Panc1 (cell line): ENCODE measurements at regions of chr14 and their contacts with region 1.

Region 1: GRCh38 chr14:56751471-56751870 is 58.8 kb downstream of the OTX2 start:
- DNase-seq: no peak
- ATAC-seq: no peak
- H3K4me3 ChIP-seq: no peak overlapping the region
- H3K27ac ChIP-seq: no peak overlapping the region
- H3K4me1 ChIP-seq: no peaks in the 10 kb centered on the region
- H3K27me3 ChIP-seq: no peaks in the 10 kb centered on the region; the same call in none of the 2 replicates
- CTCF ChIP-seq: no peak

Region 2: GRCh38 chr14:56524971-56525677 is 226.3 kb before region 1 on chr14:
- CTCF ChIA-PET with region 1: no interaction called
- POLR2A ChIA-PET with region 1: interaction called, 12 read pairs
- in situ Hi-C with region 1: no loop called
- intact Hi-C with region 1: no loop called
- DNase-seq: no peak
- ATAC-seq: no peak
- H3K4me3 ChIP-seq: no peak overlapping the region
- H3K27ac ChIP-seq: no peak overlapping the region
- H3K4me1 ChIP-seq: no peaks in the 10 kb centered on the region
- H3K27me3 ChIP-seq: peaks cover 8% of the 10 kb centered on the region; the same call in 1 of the 2 replicates
- CTCF ChIP-seq: no peak